PC-3 (cell line): ENCODE measurements at regions of chr4 and their contacts with region 1.

Region 1: DNA sequence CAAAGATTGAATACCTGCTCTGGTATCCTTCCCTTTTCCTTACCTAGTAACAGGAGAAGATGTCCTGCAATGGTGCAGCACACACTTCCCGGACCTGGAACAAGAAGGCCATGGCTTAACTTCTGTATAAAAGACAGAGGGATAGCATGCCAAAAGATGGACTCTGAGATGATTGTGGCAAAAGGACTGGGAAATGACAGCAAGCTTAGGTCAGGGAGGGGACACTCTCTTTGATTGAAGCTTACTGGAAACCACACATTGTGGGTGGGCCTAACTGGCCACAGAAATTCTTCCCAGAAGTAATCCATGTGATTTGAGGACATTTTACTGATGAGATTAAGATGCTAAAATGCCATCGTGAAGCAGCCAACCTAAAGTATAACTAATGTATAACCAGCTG is 71.0 kb upstream of the OTUD4 start:
- DNase-seq: no peak
- ATAC-seq: no peak
- H3K4me3 ChIP-seq: no peak overlapping the region
- H3K27ac ChIP-seq: no peak overlapping the region
- H3K4me1 ChIP-seq: no peaks in the 10 kb centered on the region
- H3K27me3 ChIP-seq: peaks cover 4% of the 10 kb centered on the region; the same call in 1 of the 2 replicates
- CTCF ChIP-seq: no peak

Region 2: DNA sequence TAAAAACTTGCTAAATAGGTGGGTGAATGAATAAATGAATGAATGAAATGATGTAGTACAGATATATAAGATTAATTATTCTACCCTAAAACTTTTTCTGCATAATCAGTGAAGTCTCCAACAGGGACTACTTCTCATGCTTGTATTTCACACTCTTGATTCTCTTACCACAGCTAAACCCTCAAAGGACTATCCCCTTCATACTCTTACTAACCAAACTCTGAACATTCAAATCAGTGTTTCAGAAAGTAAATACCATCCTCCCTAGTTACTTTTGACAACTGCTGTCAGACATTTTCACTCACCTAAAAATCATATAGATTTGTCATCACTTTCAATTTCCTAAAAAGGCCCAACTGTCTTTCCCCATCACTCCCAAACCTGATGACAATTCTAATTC is 839.7 kb before region 1 on chr4:
- CTCF ChIA-PET with region 1: no interaction called
- POLR2A ChIA-PET with region 1: no interaction called
- intact Hi-C with region 1: no loop called
- DNase-seq: no peak
- ATAC-seq: no peak
- H3K4me3 ChIP-seq: no peak overlapping the region
- H3K27ac ChIP-seq: no peak overlapping the region
- H3K4me1 ChIP-seq: no peaks in the 10 kb centered on the region
- H3K27me3 ChIP-seq: no peaks in the 10 kb centered on the region
- CTCF ChIP-seq: no peak

Region 3: GRCh38 chr4:144591401-144591800 is 660.0 kb before region 1 on chr4:
- CTCF ChIA-PET with region 1: no interaction called
- POLR2A ChIA-PET with region 1: no interaction called
- intact Hi-C with region 1: no loop called
- DNase-seq: peak; percentile 74
- ATAC-seq: peak; percentile 81
- H3K4me3 ChIP-seq: no peak overlapping the region
- H3K27ac ChIP-seq: no peak overlapping the region
- H3K4me1 ChIP-seq: peaks cover 8% of the 10 kb centered on the region; the same call in 1 of the 2 replicates
- H3K27me3 ChIP-seq: no peaks in the 10 kb centered on the region
- CTCF ChIP-seq: no peak

Region 4: GRCh38 chr4:145271194-145271593 is 19.8 kb after region 1 on chr4:
- CTCF ChIA-PET with region 1: no interaction called
- POLR2A ChIA-PET with region 1: interaction called, 20 read pairs
- intact Hi-C with region 1: no loop called
- DNase-seq: no peak
- ATAC-seq: no peak
- H3K4me3 ChIP-seq: no peak overlapping the region
- H3K27ac ChIP-seq: no peak overlapping the region
- H3K4me1 ChIP-seq: no peaks in the 10 kb centered on the region
- H3K27me3 ChIP-seq: no peaks in the 10 kb centered on the region
- CTCF ChIP-seq: no peak

Region 5: GRCh38 chr4:145299380-145300076 is 48.1 kb after region 1 on chr4:
- CTCF ChIA-PET with region 1: no interaction called
- POLR2A ChIA-PET with region 1: no interaction called
- intact Hi-C with region 1: no loop called
- DNase-seq: peak; percentile 93
- ATAC-seq: peak; percentile 82
- H3K4me3 ChIP-seq: peak overlapping the region; percentile 36; the same call in 1 of the 2 replicates
- H3K27ac ChIP-seq: peak overlapping the region; percentile 84
- H3K4me1 ChIP-seq: peaks cover 33% of the 10 kb centered on the region
- H3K27me3 ChIP-seq: no peaks in the 10 kb centered on the region
- CTCF ChIP-seq: no peak